WTC11 (cell line): ENCODE measurements at regions of chr22 and their contacts with region 1.

Region 1: GRCh38 chr22:41666661-41667258 is 21.9 kb downstream of the SNU13 start:
- DNase-seq: peak; percentile 92
- ATAC-seq: peak; percentile 86
- H3K4me3 Mint-ChIP-seq: peak overlapping the region; percentile 60
- H3K27ac Mint-ChIP-seq: peak overlapping the region; percentile 98
- H3K4me1 Mint-ChIP-seq: peaks cover 12% of the 10 kb centered on the region
- H3K27me3 Mint-ChIP-seq: no peaks in the 10 kb centered on the region
- CTCF ChIP-seq: peak; percentile 87

Region 2: GRCh38 chr22:41429232-41429950 is 237.4 kb before region 1 on chr22:
- CTCF ChIA-PET with region 1: no interaction called
- POLR2A ChIA-PET with region 1: no interaction called
- DNase-seq: no peak
- ATAC-seq: no peak
- H3K4me3 Mint-ChIP-seq: no peak overlapping the region
- H3K27ac Mint-ChIP-seq: 0 out of 2 replicates have a peak overlapping the region, but pooled peaks have one; percentile 36
- H3K4me1 Mint-ChIP-seq: peaks cover 3% of the 10 kb centered on the region; the same call in 1 of the 2 replicates
- H3K27me3 Mint-ChIP-seq: no peaks in the 10 kb centered on the region
- CTCF ChIP-seq: no peak

Region 3: DNA sequence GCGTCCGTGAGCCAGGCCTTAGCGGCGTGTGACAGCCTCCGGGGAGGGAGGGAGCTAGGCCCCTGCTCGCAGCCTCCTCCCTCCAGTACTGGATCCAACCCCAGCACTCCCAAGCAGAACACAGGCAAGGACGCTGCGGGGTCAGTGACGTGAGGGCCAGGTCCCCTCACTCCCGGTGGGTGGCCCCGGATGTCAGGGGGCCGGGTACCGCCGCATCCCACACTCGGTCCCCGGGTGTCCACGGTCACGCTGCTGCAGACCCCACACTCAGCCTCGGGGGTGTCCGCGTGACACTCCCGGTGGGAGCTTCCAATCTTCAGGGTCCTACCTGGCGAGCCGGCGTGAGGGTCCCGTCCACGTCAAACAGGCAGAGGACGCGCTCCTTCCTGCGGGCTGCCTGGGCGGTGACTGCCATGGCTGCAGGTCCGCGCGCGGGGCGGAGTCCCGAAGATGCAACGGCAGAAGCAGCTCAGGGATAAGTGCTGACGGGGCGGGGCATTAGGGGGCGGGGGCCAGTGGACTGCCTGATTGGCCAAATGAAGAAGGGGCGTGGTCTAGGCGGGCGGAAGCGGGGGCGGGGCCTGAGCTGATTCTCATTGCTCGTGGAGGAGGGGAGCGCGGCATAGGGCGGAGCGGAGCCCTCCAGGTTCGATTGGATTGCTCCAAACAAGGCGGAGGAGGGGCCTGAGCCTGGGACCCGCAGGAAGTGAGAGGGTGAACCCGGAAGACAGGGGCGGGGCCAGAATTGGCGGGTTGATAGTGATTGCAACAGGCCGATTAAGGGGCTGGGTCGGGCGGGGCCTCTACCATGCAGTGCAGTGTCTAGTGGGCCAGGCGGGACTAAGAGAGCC is 77.1 kb before region 1 on chr22 and contains the start of gene PMM1:
- CTCF ChIA-PET with region 1: interaction called, 15 read pairs
- POLR2A ChIA-PET with region 1: interaction called, 4 read pairs
- DNase-seq: peak; percentile 100
- ATAC-seq: peak; percentile 99
- H3K4me3 Mint-ChIP-seq: peak within 1 kb of the TSS; percentile 89
- H3K27ac Mint-ChIP-seq: peak within 1 kb of the TSS; percentile 76
- H3K4me1 Mint-ChIP-seq: peaks cover 6% of the 10 kb centered on the region
- H3K27me3 Mint-ChIP-seq: peaks cover 10% of the 10 kb centered on the region; the same call in 1 of the 2 replicates
- CTCF ChIP-seq: no peak
- total RNA-seq, gene PMM1: 14.8 to 15.7 TPM (median 15.0 TPM) in 3 replicates

Region 4: DNA sequence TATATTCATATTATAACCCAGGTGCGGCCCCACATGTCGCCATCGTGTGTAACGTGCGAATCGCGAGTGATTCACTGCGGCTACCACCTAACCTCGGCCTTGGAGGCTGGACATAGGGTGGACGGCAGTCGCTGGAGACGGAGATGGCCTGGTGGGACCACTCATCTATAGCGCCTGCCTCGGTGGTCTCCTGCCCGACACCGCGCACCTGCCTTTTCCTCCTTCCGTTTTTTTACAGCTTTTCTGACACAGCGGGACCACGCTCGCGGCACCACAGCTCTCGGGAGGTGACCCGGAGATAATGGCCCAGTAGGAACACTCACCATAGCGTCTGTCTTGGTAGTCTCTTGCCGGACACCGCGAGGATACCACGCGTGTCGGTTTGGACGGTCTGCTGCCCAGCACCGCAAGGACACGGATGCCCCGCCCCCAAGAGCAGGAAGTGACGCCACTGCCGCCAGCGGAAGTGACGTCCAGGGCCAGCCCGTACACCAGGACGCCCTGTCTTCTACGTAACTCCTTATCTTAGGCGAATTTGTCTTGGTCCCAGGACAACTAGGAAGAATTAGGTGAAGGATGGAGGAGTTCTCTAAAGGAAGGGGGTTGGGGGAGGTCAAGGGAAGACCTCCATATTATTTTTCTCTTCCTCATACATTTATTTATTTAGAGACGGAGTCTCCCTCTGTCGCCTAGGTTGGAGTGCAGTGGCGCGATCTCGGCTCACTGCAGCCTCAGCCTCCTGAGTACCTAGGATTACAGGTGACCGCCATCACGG is 15.5 kb after region 1 on chr22:
- CTCF ChIA-PET with region 1: interaction called, 27 read pairs
- POLR2A ChIA-PET with region 1: interaction called, 3 read pairs
- DNase-seq: peak; percentile 85
- ATAC-seq: peak; percentile 79
- H3K4me3 Mint-ChIP-seq: peak overlapping the region; percentile 98
- H3K27ac Mint-ChIP-seq: peak overlapping the region; percentile 98
- H3K4me1 Mint-ChIP-seq: peaks cover 2% of the 10 kb centered on the region
- H3K27me3 Mint-ChIP-seq: no peaks in the 10 kb centered on the region
- CTCF ChIP-seq: no peak

Region 5: GRCh38 chr22:41732096-41732772 is 65.5 kb after region 1 on chr22:
- CTCF ChIA-PET with region 1: no interaction called
- POLR2A ChIA-PET with region 1: no interaction called
- DNase-seq: no peak
- ATAC-seq: no peak
- H3K4me3 Mint-ChIP-seq: no peak overlapping the region
- H3K27ac Mint-ChIP-seq: no peak overlapping the region
- H3K4me1 Mint-ChIP-seq: no peaks in the 10 kb centered on the region
- H3K27me3 Mint-ChIP-seq: no peaks in the 10 kb centered on the region; the same call in 1 of the 2 replicates
- CTCF ChIP-seq: no peak

Region 6: DNA sequence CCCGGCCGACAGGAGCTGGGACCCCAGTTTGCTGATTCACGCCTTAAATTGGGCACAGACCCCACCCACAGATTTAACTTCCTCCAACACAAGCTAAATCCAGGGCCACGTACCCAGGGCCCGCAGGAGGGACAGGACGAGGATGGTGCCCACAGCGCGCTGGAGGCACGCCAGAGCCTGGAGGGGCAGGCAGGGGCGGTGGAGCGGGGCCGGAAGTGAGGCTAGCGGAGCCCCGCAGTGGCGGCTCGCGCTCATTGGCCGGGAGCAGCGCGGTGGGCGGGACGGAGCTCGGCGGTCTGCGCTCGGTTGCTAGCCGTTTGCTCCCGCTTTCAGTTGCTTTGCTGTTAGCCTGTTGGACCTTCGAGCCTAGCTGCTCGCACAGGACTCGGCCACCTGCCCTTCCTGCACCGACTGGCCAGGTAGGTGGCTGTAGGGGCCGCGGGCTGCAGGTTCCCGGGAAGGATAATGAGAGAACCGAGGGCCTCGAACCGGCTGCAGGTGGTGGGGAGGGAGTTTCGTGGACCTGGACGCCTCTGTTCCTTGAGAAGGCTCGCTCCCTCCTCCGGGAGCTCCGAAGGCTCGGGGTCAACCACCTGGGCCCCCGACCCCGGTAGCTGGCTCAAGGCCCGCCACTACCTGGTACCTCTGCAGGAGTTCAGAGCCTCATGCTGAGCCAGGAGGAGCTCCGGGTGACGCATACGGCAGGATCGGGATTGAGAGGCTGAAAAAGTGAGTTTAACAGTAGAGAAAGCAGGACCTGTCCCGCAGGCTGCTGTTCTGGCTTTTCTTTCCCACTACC is 133.8 kb after region 1 on chr22 and contains the start of gene CCDC134:
- CTCF ChIA-PET with region 1: interaction called, 21 read pairs
- POLR2A ChIA-PET with region 1: no interaction called
- DNase-seq: peak; percentile 91
- ATAC-seq: peak; percentile 95
- H3K4me3 Mint-ChIP-seq: peak within 1 kb of the TSS; percentile 96
- H3K27ac Mint-ChIP-seq: peak within 1 kb of the TSS; percentile 98
- H3K4me1 Mint-ChIP-seq: peaks cover 30% of the 10 kb centered on the region
- H3K27me3 Mint-ChIP-seq: no peaks in the 10 kb centered on the region
- CTCF ChIP-seq: no peak
- total RNA-seq, gene CCDC134: 19.0 to 21.3 TPM (median 19.2 TPM) in 3 replicates

Region 7: GRCh38 chr22:41940832-41941765 is 274.3 kb after region 1 on chr22:
- CTCF ChIA-PET with region 1: interaction called, 15 read pairs
- POLR2A ChIA-PET with region 1: no interaction called
- DNase-seq: peak; percentile 91
- ATAC-seq: peak; percentile 87
- H3K4me3 Mint-ChIP-seq: no peak overlapping the region
- H3K27ac Mint-ChIP-seq: peak overlapping the region; percentile 0; the same call in 1 of the 2 replicates
- H3K4me1 Mint-ChIP-seq: peaks cover 29% of the 10 kb centered on the region
- H3K27me3 Mint-ChIP-seq: no peaks in the 10 kb centered on the region
- CTCF ChIP-seq: peak; percentile 84